Activated CD4-positive, alpha-beta T cell treated with anti-CD3 and anti-CD28 coated beads, Interleukin-2, amount 10 ng/mL, durations not matched to agents 24 days and 14 days (primary cell): ENCODE measurements at regions of chr1 and their contacts with region 1.

Region 1: GRCh38 chr1:38489844-38490270 is 369.7 kb downstream of the RRAGC start:
- DNase-seq: peak; percentile 79
- H3K4me3 Mint-ChIP-seq: no peak overlapping the region
- H3K27ac Mint-ChIP-seq: no peak overlapping the region
- H3K4me1 Mint-ChIP-seq: peaks cover 2% of the 10 kb centered on the region
- H3K27me3 Mint-ChIP-seq: peaks cover 30% of the 10 kb centered on the region

Region 2: DNA sequence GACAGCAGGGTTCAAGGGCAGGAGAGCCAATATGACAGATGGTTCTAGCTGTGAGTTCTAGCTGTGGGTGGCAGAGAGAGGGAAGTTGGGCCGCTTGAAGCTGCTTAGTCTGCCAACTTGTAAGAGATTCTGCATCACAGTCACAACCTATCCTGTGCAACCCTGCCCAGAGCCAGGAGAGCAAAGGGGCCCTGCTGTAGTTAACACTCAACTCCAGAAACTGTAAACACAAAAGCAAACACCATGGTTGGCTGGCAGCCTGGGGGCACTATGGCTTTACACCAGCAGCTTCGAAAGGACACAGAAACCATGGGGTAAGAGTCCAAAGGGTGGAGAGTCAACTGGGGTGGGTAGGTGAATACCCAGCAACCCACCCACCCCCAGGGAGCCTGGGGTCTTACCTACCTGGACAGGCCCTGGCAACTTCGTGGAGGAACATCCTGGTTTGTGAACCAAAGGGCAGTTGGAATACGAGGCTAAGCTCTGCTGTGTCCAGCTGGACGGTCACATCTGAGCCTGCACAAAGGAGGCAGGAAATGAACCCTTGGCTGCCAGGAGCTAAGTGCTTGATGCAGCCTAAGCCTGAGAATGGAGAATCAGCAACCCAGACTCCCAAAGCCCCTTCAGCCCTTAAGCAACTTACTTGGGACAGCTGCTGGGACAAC is 549.4 kb before region 1 on chr1:
- intact Hi-C with region 1: no loop called
- DNase-seq: no peak
- H3K4me3 Mint-ChIP-seq: no peak overlapping the region
- H3K27ac Mint-ChIP-seq: no peak overlapping the region
- H3K4me1 Mint-ChIP-seq: peaks cover 2% of the 10 kb centered on the region
- H3K27me3 Mint-ChIP-seq: no peaks in the 10 kb centered on the region

Region 3: GRCh38 chr1:38464071-38464661 is 25.7 kb before region 1 on chr1:
- intact Hi-C with region 1: no loop called
- DNase-seq: no peak
- H3K4me3 Mint-ChIP-seq: no peak overlapping the region
- H3K27ac Mint-ChIP-seq: no peak overlapping the region
- H3K4me1 Mint-ChIP-seq: no peaks in the 10 kb centered on the region
- H3K27me3 Mint-ChIP-seq: peaks cover 20% of the 10 kb centered on the region

Region 4: DNA sequence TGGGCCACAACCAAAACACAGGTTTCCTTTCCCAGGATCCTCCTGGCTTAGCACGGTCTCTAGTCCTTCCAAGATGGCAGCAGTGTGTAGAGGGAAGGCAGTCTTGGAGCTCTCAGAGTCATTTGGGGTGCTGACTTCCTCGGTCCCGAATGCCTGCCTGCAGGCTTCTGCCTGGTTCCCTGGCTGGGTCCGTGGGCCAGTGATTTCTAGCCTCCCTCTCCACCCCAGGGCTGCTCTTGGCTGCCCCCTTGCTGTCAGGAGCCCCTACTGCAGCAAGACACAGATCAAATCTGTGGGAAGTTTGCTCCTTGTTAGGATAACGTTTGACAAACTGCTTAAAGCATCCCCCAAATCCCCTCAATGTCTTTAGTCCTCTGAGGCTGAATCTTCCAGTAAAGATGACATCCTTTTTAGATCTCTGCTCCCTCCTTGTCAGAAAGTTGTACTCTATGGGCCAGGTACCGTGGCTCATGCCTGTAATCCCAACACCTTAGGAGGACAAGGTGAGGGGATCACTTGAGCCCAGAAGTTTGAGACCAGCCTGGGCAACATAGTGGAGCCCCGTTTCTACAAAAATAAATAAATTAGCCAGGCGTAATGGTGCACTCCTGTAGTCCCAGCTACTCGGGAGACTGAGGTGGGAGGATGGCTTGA is 97.3 kb after region 1 on chr1:
- intact Hi-C with region 1: loop called (anchors 5 kb)
- DNase-seq: peak; percentile 86
- H3K4me3 Mint-ChIP-seq: no peak overlapping the region
- H3K27ac Mint-ChIP-seq: no peak overlapping the region
- H3K4me1 Mint-ChIP-seq: peaks cover 14% of the 10 kb centered on the region
- H3K27me3 Mint-ChIP-seq: peaks cover 16% of the 10 kb centered on the region